CD4-positive, alpha-beta T cell (primary cell): ENCODE measurements at regions of chr15 and their contacts with region 1.

Region 1: DNA sequence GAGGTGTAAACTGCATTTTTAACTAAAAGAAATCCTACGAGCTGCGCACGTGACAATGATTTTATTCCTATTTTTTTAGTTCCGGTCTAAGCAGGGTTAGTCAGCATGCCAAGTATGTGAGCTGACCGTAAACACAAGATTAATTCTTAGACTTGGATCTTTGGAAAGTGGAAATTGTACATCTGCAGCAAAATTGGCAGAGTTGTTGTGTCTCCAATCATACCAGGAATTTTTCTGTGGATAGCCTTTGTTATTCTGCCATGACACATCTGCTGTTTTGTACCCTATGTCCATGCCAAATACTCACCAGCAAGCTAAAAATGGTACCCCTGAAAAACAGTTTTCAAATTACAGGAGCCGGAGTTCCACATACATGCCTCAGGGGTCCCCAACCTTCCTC is 562.5 kb downstream of the UNC13C start:
- DNase-seq: no peak
- ATAC-seq: no peak
- H3K4me3 ChIP-seq: no peak overlapping the region
- H3K4me3 Mint-ChIP-seq: no peak overlapping the region
- H3K27ac ChIP-seq: no peak overlapping the region
- H3K27ac Mint-ChIP-seq: no peak overlapping the region
- H3K4me1 ChIP-seq: no peaks in the 10 kb centered on the region
- H3K4me1 Mint-ChIP-seq: no peaks in the 10 kb centered on the region
- H3K27me3 ChIP-seq: no peaks in the 10 kb centered on the region
- H3K27me3 Mint-ChIP-seq: no peaks in the 10 kb centered on the region
- CTCF ChIP-seq: no peak

Region 2: DNA sequence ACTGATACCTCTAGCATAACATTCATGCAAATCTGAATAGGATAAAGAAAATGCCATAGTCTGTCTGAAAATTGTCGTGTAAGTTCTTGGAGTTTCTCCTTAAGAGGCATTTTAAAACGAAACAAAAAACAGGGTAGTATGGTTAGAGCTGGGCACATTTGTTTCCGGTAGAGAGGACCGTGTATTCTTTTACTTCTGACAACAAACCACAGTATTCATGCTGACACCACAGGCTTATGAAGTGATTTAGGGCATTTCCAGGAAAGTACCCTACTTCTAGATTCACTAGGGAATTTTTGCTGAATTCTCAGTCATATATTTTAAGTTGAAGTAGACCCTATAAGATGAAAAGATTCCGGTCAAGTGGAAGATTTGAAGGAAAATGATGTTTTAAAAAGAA is 21.1 kb before region 1 on chr15:
- CTCF ChIA-PET with region 1: no interaction called
- POLR2A ChIA-PET with region 1: no interaction called
- intact Hi-C with region 1: loop called in 1 of 2 experiments (anchors 2 kb)
- DNase-seq: peak in 3 of 14 experiments; percentile 10 to 26 (median 15)
- ATAC-seq: no peak
- H3K4me3 ChIP-seq: no peak overlapping the region
- H3K4me3 Mint-ChIP-seq: peak overlapping the region; percentile 1
- H3K27ac ChIP-seq: no peak overlapping the region
- H3K27ac Mint-ChIP-seq: no peak overlapping the region
- H3K4me1 ChIP-seq: no peaks in the 10 kb centered on the region
- H3K4me1 Mint-ChIP-seq: peaks cover 24% of the 10 kb centered on the region
- H3K27me3 ChIP-seq: no peaks in the 10 kb centered on the region
- H3K27me3 Mint-ChIP-seq: no peaks in the 10 kb centered on the region
- CTCF ChIP-seq: no peak

Region 3: DNA sequence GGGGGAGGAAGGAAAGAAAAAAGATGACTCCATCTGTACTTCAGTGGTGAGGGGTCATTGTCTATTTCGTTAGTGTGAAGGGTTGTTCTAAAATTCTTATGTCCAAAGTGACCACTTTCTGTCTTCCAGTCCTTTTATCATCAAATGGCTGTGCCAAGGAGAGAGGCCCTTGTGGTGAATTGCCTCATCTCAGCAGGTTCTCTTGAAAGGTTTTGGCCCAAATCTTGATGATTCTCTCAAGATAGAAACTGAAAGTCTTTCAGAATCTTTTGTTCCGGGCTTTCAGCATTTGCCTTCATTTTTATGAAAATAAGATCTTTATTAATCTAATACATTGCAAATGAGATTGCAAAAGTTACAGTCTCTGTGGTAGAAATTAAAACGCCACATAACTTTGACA is 80.2 kb after region 1 on chr15:
- CTCF ChIA-PET with region 1: no interaction called
- POLR2A ChIA-PET with region 1: no interaction called
- intact Hi-C with region 1: no loop called
- DNase-seq: no peak
- ATAC-seq: no peak
- H3K4me3 ChIP-seq: no peak overlapping the region
- H3K4me3 Mint-ChIP-seq: no peak overlapping the region
- H3K27ac ChIP-seq: no peak overlapping the region
- H3K27ac Mint-ChIP-seq: no peak overlapping the region
- H3K4me1 ChIP-seq: no peaks in the 10 kb centered on the region
- H3K4me1 Mint-ChIP-seq: no peaks in the 10 kb centered on the region
- H3K27me3 ChIP-seq: no peaks in the 10 kb centered on the region
- H3K27me3 Mint-ChIP-seq: no peaks in the 10 kb centered on the region
- CTCF ChIP-seq: no peak